ENCODE measurements at regions of chr5 and their contacts with region 1.

Region 1: DNA sequence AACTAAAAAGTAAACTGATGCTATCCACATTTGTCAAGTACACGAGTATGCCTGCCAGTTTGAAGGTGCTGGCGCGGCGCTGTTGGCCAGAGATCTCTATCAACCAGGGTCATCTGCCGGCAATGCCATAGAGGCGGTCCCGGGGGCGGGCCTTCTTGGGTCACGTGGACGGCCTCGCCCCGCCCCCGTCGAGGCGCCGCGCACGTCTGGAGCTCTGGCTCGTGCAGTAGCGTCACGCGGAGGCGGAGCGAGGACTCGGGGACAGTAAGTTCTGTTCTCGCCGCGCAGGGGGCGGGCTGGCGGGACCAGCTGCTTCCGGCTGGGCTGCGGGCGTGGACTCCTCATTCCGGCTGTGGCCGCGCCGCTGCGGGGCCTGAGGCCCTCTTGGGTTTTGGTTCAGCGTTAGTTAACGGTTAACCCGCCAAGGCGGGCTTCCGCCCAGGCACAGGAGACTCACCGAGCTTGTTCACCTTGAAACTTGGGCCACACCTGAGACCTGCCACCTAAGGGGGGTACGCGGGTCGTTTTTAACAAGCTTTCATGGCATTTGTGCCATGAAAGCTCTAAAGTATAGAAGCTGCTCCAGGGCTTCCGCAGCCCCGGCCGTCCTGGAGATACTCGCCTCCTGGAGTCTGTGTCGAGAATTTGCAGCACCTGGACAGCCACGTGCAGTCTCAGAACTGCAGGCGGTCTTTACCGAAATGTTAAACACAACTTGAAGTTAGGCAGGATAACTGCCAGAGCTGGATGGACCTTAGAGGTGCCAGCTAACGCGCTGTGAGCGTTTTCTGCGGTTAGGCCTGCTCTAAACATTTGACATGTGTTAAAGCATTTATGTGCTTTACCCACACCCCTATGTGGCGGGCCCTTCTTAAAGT is at the start of gene RFESD:
- DNase-seq: peak; percentile 96 to 97 (median 97)
- H3K4me3 ChIP-seq: peak within 1 kb of the TSS; percentile 47 to 82 (median 50)
- H3K4me3 Mint-ChIP-seq: peak within 1 kb of the TSS; percentile 84 to 89
- H3K27ac ChIP-seq: peak within 1 kb of the TSS; percentile 49 to 82
- H3K27ac Mint-ChIP-seq: peak within 1 kb of the TSS; percentile 78 to 92 (median 86)
- H3K4me1 ChIP-seq: peaks cover 12 to 15% of the 10 kb centered on the region in 2 donors
- H3K4me1 Mint-ChIP-seq: peaks cover 13% of the 10 kb centered on the region
- H3K27me3 ChIP-seq: no peaks in the 10 kb centered on the region
- H3K27me3 Mint-ChIP-seq: peaks cover 0 to 1% (median 0%) of the 10 kb centered on the region in 3 donors
- CTCF ChIP-seq: no peak
- polyA plus RNA-seq, gene RFESD: 0.15 to 1.4 (median 0.24) TPM

Region 2: DNA sequence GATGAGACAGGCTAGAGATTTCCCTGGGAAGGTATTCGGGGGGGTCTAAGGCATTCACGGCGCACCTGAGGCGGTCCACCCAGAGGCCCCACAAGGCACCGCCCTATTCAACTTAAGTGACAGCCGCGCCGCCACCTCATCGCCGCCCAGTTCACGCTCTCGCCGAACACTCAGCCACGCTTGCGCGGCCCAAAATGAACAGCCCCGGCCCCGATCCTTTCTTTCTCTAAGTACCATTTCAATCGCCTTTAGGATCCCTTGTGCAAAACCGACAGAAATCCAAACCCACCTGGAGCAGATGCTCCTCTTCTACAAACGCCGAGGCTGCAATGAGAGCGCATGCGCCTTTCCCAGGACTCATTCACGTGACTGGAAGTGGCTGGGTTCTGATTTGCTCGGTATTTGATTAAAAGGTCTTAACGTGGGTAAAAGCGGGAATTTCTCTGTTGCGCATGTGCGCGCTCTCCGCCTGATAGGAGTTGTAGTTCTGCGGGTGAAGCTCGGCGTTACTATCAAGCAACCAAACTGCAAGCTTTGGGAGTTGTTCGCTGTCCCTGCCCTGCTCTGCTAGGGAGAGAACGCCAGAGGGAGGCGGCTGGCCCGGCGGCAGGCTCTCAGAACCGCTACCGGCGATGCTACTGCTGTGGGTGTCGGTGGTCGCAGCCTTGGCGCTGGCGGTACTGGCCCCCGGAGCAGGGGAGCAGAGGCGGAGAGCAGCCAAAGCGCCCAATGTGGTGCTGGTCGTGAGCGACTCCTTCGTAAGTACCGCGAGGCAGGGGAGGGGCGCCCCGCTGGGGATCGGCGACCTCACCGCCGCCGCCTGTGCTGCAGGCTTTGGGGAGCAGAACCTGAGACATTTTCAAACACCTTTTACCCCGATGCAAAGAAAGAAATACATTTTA is 91.9 kb before region 1 on chr5 and contains the starts of genes ARSK and SKIC3:
- intact Hi-C with region 1: loop called in 1 of 2 experiments (anchors 5 kb)
- DNase-seq: peak; percentile 96 to 98 (median 96)
- H3K4me3 ChIP-seq: peak within 1 kb of the TSS; percentile 60 to 85 (median 65)
- H3K4me3 Mint-ChIP-seq: peak within 1 kb of the TSS; percentile 92 to 96
- H3K27ac ChIP-seq: peak within 1 kb of the TSS; percentile 71 to 75
- H3K27ac Mint-ChIP-seq: peak within 1 kb of the TSS; percentile 82 to 98 (median 90)
- H3K4me1 ChIP-seq: peaks cover 20 to 25% of the 10 kb centered on the region in 2 donors
- H3K4me1 Mint-ChIP-seq: peaks cover 29% of the 10 kb centered on the region
- H3K27me3 ChIP-seq: no peaks in the 10 kb centered on the region
- H3K27me3 Mint-ChIP-seq: no peaks in the 10 kb centered on the region
- CTCF ChIP-seq: peak; percentile 21
- polyA plus RNA-seq, gene ARSK: 0.67 to 1.3 (median 1.3) TPM
- polyA plus RNA-seq, gene SKIC3: 13.7 to 24.6 (median 17.6) TPM

Measured in CD14-positive monocyte (primary cell).